ENCODE measurements at regions of chr2 and their contacts with region 1.

Region 1: GRCh38 chr2:3728104-3729054 is 25.0 kb downstream of the DCDC2C start:
- DNase-seq: no peak
- ATAC-seq: no peak

Region 2: GRCh38 chr2:3780477-3781402 is 52.4 kb after region 1 on chr2:
- intact Hi-C with region 1: loop called (anchors 5 kb)
- DNase-seq: no peak
- ATAC-seq: peak; percentile 84

Region 3: DNA sequence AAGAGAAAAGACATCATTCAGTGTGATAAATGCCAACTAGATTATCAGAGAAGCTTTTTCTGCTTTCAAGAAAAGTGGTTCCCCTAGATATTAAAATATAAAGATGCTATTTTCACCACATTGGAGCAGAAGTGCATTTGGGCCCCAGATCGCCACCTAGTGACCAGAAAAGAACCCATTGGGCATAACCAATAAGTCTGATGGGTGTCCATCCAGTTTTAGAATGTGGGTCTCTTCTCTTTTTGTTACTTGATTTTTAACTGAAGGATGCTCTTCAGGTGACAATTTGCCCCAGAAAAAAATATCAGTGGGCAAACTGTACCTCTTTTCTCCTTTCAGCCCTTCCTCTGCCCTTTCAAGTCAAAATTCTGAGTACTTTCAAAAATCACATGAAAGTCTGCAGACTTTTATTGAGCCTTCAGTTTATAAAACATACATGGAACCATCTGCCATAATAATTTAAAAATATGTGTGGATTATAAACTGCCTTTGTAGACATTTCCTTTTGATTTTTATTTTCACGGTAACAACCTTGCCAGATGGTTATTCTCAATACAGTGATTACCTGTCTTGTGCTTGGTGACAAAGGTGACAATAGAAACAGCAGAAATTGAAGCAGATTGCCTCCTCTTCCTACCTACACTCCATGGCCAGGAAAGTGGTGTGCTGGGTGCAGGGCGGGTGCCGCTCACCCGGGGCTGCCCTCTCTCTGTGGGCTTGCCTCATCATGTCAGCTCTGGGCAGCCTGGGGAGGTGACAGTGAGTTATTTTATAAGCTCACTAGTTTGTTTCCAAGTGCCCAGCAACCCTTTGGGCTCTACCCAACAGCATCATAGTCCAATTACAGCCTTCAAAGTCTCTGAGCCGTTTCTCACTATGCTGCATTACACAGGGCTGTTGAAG is 99.5 kb after region 1 on chr2:
- intact Hi-C with region 1: loop called (anchors 5 kb)
- DNase-seq: peak; percentile 59
- ATAC-seq: no peak

Measured in Right ventricle myocardium inferior (tissue), 1 donor.